Dorsolateral prefrontal cortex (tissue), 120 donors: ENCODE measurements at regions of chr5 and their contacts with region 1.

Region 1: GRCh38 chr5:57499262-57500050 is 16.8 kb upstream of the ACTBL2 start:
- DNase-seq: no peak
- H3K4me3 ChIP-seq: peak overlapping the region in 26 of 59 donors; percentile 2 to 38 (median 20)
- H3K27ac ChIP-seq: peak overlapping the region in 37 of 59 donors; percentile 1 to 78 (median 33)
- H3K27me3 ChIP-seq: no peaks in the 10 kb centered on the region
- CTCF ChIP-seq: peak; percentile 63 to 93 (median 80)

Region 2: GRCh38 chr5:57298295-57298984 is 201.0 kb before region 1 on chr5:
- intact Hi-C with region 1: loop called (anchors 5 kb)
- DNase-seq: peak; percentile 44 to 87 (median 80)
- H3K4me3 ChIP-seq: peak overlapping the region in 31 of 59 donors; percentile 2 to 50 (median 36)
- H3K27ac ChIP-seq: peak overlapping the region in 4 of 59 donors; percentile 16 to 55 (median 32)
- H3K27me3 ChIP-seq: no peaks in the 10 kb centered on the region
- CTCF ChIP-seq: peak; percentile 63 to 92 (median 84)

Region 3: GRCh38 chr5:57416249-57416994 is 83.0 kb before region 1 on chr5:
- intact Hi-C with region 1: loop called in 1 of 2 experiments (anchors 10 kb)
- DNase-seq: no peak
- H3K4me3 ChIP-seq: no peak overlapping the region
- H3K27ac ChIP-seq: peak overlapping the region in 10 of 59 donors; percentile 0 to 38 (median 28)
- H3K27me3 ChIP-seq: no peaks in the 10 kb centered on the region
- CTCF ChIP-seq: no peak

Region 4: GRCh38 chr5:57642066-57642465 is 142.6 kb after region 1 on chr5:
- intact Hi-C with region 1: no loop called
- DNase-seq: no peak
- H3K4me3 ChIP-seq: no peak overlapping the region
- H3K27ac ChIP-seq: no peak overlapping the region
- H3K27me3 ChIP-seq: no peaks in the 10 kb centered on the region
- CTCF ChIP-seq: no peak

Region 5: GRCh38 chr5:57662991-57663390 is 163.5 kb after region 1 on chr5:
- intact Hi-C with region 1: loop called in 1 of 2 experiments (anchors 5 kb)
- DNase-seq: no peak
- H3K4me3 ChIP-seq: no peak overlapping the region
- H3K27ac ChIP-seq: peak overlapping the region in 5 of 59 donors; percentile 6 to 53 (median 35)
- H3K27me3 ChIP-seq: no peaks in the 10 kb centered on the region
- CTCF ChIP-seq: peak in 4 of 56 donors; percentile 8 to 17 (median 10)

Region 6: DNA sequence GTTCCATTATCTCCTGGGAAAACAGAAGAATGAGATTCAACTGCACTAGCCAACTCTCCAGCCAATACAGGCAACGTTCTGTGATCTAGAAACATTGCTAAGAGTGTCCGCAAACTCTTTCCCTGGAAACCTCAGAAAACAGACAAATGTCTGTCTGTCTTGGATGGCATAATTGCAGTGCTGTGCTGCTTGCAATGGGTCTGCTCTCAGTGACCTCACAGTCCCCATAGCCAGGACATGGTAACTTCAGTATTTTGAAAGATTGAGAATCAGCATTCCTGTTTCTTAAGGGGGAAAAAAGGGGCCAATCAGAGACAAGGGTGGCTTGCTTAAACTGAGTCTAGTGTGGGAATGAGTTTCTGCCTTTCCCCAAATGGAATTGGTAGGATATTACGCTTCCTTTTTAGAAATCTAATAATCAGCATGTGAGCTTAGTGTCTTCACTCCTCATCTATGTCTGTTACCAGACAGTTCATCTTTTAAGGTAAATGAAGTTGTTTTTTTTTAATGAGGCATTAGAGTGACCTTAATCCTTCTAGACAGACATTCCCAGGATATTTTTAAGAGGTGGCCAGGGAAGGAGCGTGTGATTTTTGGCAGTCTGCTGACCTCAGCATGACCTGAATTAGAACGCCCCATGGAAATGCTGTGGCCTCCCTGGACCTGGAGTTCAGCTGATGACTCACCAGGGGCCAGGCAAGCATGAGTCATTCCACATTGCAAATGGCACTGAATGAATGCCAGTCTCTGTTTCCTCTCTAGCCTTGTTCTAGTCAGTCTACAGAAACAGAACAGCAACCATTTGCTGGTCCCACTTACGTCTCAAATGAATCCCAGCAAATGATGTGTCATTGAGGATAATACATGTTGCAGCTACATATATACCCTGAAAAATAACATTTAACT is 193.4 kb after region 1 on chr5:
- intact Hi-C with region 1: loop called in 1 of 2 experiments (anchors 5 kb)
- DNase-seq: peak in 9 of 10 donors; percentile 45 to 89 (median 76)
- H3K4me3 ChIP-seq: peak overlapping the region in 11 of 59 donors; percentile 3 to 45 (median 12)
- H3K27ac ChIP-seq: peak overlapping the region; percentile 24 to 92 (median 81)
- H3K27me3 ChIP-seq: no peaks in the 10 kb centered on the region
- CTCF ChIP-seq: peak in 3 of 56 donors; percentile 24 to 43 (median 29)

Region 7: GRCh38 chr5:57779383-57780223 is 280.1 kb after region 1 on chr5:
- intact Hi-C with region 1: loop called (anchors 5 kb)
- DNase-seq: peak in 3 of 10 donors; percentile 21 to 63 (median 47)
- H3K4me3 ChIP-seq: peak overlapping the region in 1 of 59 donors; percentile 3
- H3K27ac ChIP-seq: peak overlapping the region in 42 of 59 donors; percentile 1 to 84 (median 53)
- H3K27me3 ChIP-seq: no peaks in the 10 kb centered on the region
- CTCF ChIP-seq: peak in 55 of 56 donors; percentile 50 to 89 (median 72)